Mucosa of descending colon (tissue), 3 donors: ENCODE measurements at regions of chr2 and their contacts with region 1.

Region 1: GRCh38 chr2:187581125-187581896 is 27.1 kb upstream of the TFPI start:
- DNase-seq: peak in 1 of 3 donors; percentile 46
- ATAC-seq: no peak
- H3K4me3 ChIP-seq: no peak overlapping the region
- H3K4me1 ChIP-seq: no peaks in the 10 kb centered on the region
- CTCF ChIP-seq: peak; percentile 47

Region 2: GRCh38 chr2:187842978-187843847 is 261.9 kb after region 1 on chr2:
- intact Hi-C with region 1: loop called in 1 of 2 experiments (anchors 5 kb)
- DNase-seq: peak in 1 of 3 donors; percentile 39
- ATAC-seq: peak; percentile 28
- H3K4me3 ChIP-seq: no peak overlapping the region
- H3K4me1 ChIP-seq: no peaks in the 10 kb centered on the region
- CTCF ChIP-seq: peak; percentile 10